Lower lobe of right lung (tissue), 2 donors: ENCODE measurements at regions of chr10 and their contacts with region 1.

Region 1: DNA sequence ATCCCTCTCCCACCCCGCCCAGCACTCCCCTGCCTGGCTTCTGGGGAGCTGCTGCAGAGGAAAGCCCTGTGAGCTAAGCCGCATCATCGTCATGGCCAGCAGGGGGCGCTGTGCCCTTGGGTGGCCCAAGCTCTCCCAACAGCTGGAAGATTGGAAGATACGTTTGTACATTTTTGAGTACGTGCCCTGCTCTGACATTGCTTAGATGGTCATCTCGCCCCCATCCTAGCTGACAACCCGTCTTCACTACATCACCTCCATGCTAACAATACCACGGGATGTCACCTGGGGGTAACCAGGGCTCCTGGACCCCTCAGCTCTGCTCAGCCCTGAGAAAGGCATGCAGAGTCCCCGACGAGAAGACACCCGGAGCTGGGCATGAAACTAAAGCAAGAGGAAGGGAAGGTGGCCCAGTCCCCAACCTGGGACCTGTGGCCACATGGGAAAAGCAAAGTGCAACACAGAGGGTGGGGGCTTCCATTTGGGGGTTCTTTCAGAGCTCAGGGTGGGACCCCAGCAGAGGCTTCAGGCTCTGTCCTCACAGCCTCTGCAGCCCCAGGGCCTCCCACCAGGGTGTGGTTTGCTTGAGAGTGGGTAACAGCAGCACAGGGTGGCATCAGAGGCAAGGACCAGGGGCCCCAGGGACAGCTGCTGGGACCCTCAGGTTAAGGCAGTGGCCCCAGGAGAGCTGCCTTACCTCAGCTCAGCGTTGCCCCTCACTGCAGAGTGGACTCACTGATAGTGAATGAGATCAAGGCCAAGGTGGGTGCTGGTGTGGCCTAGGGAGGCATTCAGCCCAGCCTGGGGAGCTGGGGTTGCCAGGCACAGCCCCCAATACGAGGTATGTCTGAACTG is 136.7 kb downstream of the PTPN20 start:
- DNase-seq: peak; percentile 87
- ATAC-seq: peak; percentile 69 to 70
- H3K4me3 ChIP-seq: no peak overlapping the region
- H3K27ac ChIP-seq: no peak overlapping the region
- H3K4me1 ChIP-seq: peaks cover 15% of the 10 kb centered on the region
- H3K27me3 ChIP-seq: no peaks in the 10 kb centered on the region
- CTCF ChIP-seq: peak; percentile 91

Region 2: DNA sequence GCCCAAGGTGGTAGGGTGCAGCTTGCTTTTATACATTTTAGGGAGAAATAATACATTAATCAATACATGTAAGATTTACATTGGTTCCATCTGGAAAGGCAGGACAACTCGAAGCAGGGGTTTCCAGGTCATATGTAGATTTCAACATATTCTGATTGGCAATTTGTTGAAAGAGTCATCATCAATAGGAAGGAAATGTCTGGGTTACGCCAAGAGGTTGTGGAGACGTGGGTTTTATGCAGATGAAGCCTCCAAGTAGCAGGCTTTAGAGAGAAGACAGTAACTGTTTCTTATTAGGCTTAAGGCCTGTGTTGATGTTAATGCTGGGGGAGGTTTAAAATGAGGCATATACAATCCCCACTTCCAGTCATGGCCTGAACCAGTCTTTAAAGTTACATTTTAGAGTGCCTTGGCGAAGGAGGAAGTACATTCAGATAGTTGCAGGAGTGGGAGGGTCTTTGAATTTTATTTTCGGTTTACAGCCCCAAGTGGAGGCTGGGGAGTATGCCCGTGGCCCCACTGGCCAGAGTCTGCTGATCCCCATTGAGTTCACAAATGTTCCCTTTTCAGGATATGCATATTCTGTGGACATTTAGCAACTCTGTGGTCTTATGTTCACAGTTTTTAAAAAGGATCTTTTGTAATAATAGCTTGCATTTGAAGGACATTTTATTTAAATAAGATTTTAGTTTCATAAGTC is 86.1 kb after region 1 on chr10:
- intact Hi-C with region 1: no loop called
- DNase-seq: peak; percentile 66
- ATAC-seq: peak; percentile 57 to 87
- H3K4me3 ChIP-seq: no peak overlapping the region
- H3K27ac ChIP-seq: peak overlapping the region; percentile 5
- H3K4me1 ChIP-seq: no peaks in the 10 kb centered on the region
- H3K27me3 ChIP-seq: no peaks in the 10 kb centered on the region
- CTCF ChIP-seq: no peak

Region 3: DNA sequence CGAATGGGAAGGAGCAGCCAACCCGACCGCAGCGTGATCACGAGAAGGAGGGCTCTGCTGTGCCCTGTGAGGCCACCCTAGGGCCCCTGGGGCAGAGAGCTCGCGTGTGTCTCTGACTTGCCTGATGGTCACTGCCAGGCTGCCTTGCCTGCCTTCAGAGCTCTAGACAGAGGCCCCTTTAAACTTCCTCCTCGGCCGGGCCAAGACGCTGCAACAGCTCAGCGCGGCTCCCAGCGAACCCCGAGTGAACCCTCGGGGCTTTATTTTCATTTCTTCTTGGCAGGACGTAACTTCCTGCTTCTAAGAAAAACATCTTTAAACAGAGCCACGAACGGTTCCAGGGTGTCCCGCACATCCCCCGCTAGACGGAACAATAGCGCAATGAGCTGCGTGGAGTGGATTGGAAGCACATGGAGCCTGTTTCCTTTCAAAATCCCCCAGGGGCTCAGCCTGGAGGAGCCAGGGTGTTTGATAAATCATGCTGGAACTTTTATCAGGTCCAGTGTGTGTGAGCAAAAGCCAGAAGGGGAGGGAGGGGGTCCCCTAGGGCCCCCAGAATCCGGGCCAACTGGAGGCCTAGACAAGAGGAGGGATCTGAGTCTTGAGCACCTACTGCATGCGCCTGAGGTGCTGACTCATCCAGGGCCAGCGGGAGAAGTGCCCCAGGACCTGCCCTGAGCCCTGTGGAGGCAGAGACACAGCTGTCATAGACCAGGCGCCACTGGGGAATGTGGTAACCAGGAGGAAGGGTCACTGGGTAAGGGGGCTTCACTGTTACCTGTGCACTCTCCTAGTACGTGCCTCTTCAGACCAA is 118.0 kb after region 1 on chr10:
- intact Hi-C with region 1: no loop called
- DNase-seq: peak; percentile 80
- ATAC-seq: peak; percentile 80 to 87
- H3K4me3 ChIP-seq: peak overlapping the region; percentile 35
- H3K27ac ChIP-seq: peak overlapping the region; percentile 81
- H3K4me1 ChIP-seq: peaks cover 32% of the 10 kb centered on the region
- H3K27me3 ChIP-seq: no peaks in the 10 kb centered on the region
- CTCF ChIP-seq: no peak

Region 4: GRCh38 chr10:47195274-47195885 is 147.5 kb after region 1 on chr10:
- intact Hi-C with region 1: no loop called
- DNase-seq: no peak
- ATAC-seq: no peak
- H3K4me3 ChIP-seq: no peak overlapping the region
- H3K27ac ChIP-seq: no peak overlapping the region
- H3K4me1 ChIP-seq: no peaks in the 10 kb centered on the region
- H3K27me3 ChIP-seq: no peaks in the 10 kb centered on the region
- CTCF ChIP-seq: no peak

Region 5: GRCh38 chr10:47311932-47312662 is 264.2 kb after region 1 on chr10:
- intact Hi-C with region 1: loop called (anchors 10 kb)
- DNase-seq: peak; percentile 87
- ATAC-seq: peak; percentile 89 to 91
- H3K4me3 ChIP-seq: no peak overlapping the region
- H3K27ac ChIP-seq: no peak overlapping the region
- H3K4me1 ChIP-seq: peaks cover 7% of the 10 kb centered on the region
- H3K27me3 ChIP-seq: no peaks in the 10 kb centered on the region
- CTCF ChIP-seq: peak; percentile 90